Tibial artery (tissue), 4 donors: ENCODE measurements at regions of chr17 and their contacts with region 1.

Region 1: DNA sequence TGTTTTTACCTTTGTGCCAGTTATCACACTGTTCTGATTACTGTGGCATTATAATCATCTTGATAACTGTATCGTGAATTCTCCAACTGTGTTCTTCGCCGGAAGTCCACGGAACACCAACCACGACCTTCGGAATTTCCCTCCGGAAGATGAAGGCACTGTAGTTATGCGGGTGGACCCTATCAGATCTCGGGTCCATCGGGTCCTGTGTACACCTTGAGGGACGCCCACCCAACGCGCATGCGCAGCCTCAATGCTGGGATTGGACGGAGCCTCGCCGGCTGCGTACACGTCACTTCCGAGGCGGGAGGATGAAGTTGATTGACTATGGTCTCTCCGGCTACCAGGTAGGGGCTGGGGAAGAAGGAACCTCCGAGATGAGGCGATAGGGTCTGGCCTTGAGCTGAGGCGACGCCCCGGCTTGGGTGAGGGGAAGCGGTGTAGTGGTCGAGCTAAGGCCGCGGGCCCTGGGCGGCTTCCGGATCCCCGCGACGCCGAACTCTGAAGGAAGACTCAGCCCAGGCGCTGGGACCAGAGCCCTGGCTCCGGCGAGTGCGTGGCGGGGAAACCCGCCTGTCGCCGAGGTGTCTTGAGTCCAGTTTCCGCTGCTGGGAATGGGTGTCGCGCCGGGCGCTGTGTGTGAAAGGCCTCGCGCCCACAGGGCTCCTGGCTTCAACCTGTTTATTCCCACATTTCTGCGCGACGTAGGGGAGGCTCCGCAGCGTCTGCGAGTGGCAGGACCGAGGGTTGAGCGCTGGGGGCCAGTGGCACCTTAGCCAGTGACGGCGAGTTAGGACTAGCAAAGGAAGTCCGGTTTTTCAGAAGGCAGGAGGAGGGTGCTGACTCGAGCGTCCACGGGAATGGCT is at the start of gene DHRS7B:
- DNase-seq: peak; percentile 94 to 96
- H3K4me3 ChIP-seq: peak within 1 kb of the TSS; percentile 68 to 96
- H3K27ac ChIP-seq: peak within 1 kb of the TSS; percentile 87 to 95
- H3K4me1 ChIP-seq: peaks cover 0 to 11% (median 10%) of the 10 kb centered on the region in 4 donors
- H3K27me3 ChIP-seq: no peaks in the 10 kb centered on the region
- CTCF ChIP-seq: no peak

Region 2: DNA sequence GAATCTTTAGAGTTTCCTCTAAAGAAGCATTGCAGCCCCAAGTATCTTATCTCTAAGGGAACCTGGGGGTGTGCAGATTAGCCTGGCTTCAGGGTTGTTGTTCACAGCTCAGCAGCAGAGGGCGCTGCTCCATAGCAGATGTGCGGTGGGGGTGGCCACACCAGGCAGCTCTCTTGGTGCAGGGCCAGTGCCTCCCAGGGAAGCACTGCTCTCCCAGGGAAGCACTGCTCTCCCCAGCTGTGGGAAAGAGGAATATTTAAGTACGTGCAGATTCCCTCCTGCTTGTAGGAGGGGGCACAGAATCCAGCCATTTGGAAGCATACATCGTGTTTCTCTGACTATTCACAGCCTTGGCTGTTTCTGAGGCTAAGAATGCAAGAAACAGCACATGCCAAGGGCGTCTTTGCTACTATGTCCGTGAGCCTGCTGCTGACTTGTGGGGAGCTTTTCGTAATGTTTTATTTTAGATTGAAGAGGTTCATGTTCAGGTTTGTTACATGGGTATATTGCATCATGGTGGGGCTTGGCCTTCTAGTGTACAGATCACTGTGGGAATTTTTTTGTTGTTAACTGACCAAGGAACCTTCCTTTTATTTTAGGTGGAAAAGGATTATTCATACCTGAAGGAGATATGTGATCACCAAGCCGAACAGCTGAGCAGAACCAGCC is 899.9 kb before region 1 on chr17:
- intact Hi-C with region 1: no loop called
- DNase-seq: peak; percentile 81 to 91
- H3K4me3 ChIP-seq: no peak overlapping the region
- H3K27ac ChIP-seq: peak overlapping the region; percentile 13 to 50
- H3K4me1 ChIP-seq: peaks cover 0 to 57% (median 14%) of the 10 kb centered on the region in 4 donors
- H3K27me3 ChIP-seq: no peaks in the 10 kb centered on the region
- CTCF ChIP-seq: peak; percentile 78 to 98

Region 3: GRCh38 chr17:21043286-21044232 is 83.3 kb before region 1 on chr17:
- intact Hi-C with region 1: loop called (anchors 10 kb)
- DNase-seq: peak; percentile 98 to 99
- H3K4me3 ChIP-seq: peak overlapping the region; percentile 99 to 100
- H3K27ac ChIP-seq: peak overlapping the region; percentile 80 to 100
- H3K4me1 ChIP-seq: peaks cover 0 to 31% (median 24%) of the 10 kb centered on the region in 4 donors
- H3K27me3 ChIP-seq: no peaks in the 10 kb centered on the region
- CTCF ChIP-seq: peak; percentile 84 to 90

Region 4: DNA sequence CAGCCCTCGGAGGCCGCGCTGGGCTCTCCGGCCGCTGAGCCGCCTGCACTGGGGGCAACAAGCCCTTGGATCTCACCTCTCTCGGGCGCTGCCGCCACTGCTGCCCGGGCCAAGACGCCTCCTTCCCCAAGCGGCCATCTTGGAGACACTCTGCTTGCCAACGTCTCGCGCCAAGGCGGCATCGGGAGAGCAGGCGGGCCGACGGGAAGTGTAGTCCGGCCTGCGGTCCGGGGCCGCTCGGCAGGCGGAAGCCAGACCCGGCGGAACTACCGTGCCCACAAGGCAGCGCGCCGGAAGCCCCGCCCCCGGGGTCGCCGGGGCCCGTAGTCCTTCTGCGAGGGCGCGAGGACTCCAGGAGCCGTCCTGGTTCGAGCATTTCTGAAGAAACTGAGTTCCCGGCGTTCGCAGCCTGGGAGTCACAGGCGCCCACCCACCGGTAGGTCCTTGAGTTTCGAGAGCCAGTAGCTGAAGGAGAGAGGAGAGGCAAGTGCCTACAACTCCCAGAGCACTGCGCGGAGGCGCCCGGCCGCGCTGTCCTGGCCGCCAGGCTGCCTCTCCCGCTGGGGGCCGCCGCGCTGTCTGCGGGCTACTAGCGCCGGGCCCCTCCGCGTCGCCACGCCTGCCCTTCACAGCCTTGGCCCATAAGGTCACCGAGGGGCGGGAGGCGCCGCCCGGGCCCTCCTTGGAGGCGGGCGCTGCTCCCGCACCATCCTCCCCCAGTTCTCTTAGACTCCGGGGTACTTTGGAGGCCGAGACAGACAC is 87.3 kb after region 1 on chr17 and contains the start of gene TMEM11:
- intact Hi-C with region 1: loop called (anchors 5 kb)
- DNase-seq: peak; percentile 96 to 97
- H3K4me3 ChIP-seq: peak within 1 kb of the TSS; percentile 91
- H3K27ac ChIP-seq: peak within 1 kb of the TSS; percentile 91 to 96
- H3K4me1 ChIP-seq: peaks cover 0 to 54% (median 44%) of the 10 kb centered on the region in 4 donors
- H3K27me3 ChIP-seq: no peaks in the 10 kb centered on the region
- CTCF ChIP-seq: peak; percentile 13 to 40

Region 5: GRCh38 chr17:21239680-21240368 is 112.9 kb after region 1 on chr17:
- intact Hi-C with region 1: loop called (anchors 10 kb)
- DNase-seq: no peak
- H3K4me3 ChIP-seq: no peak overlapping the region
- H3K27ac ChIP-seq: no peak overlapping the region
- H3K4me1 ChIP-seq: peaks cover 0 to 37% (median 11%) of the 10 kb centered on the region in 4 donors
- H3K27me3 ChIP-seq: no peaks in the 10 kb centered on the region
- CTCF ChIP-seq: peak; percentile 35 to 40

Region 6: DNA sequence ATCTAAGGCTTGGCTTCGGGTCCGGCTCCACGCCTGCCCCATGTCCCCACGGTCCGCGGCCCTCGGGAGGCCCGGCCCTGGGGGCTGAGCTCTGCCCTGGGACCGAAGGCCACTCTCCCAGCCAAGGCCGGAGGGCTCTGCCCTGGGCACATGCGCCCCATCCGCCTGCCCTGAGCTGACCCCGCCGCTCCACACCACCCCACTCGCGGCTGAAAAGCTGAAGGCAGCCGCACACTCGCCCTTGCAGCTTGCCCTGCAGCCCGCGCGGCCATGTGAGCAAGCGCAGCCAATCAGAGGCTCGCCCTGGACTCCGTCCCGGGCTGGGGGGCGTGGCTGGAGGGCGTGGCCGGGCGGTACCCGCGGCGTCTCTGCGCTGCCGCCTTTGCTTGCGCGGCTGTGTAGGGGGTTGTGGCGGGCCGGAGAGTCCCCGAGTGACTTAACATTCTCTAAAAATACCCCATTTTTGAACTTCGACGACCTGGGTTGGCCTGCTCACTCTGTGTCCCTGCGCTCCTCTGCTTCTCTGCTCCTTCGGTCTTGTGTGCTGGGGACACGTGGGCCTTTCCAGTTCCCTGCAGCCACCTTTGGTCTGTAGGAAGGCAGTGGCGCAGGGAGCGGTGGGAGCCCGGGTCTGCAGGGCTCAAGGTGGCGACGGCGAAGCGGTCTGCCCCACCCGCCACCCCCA is 148.8 kb after region 1 on chr17:
- intact Hi-C with region 1: loop called (anchors 10 kb)
- DNase-seq: peak; percentile 91 to 95
- H3K4me3 ChIP-seq: peak overlapping the region; percentile 53 to 71
- H3K27ac ChIP-seq: peak overlapping the region; percentile 35 to 56
- H3K4me1 ChIP-seq: peaks cover 0 to 40% (median 17%) of the 10 kb centered on the region in 4 donors
- H3K27me3 ChIP-seq: no peaks in the 10 kb centered on the region
- CTCF ChIP-seq: no peak

Region 7: GRCh38 chr17:21511363-21512198 is 384.7 kb after region 1 on chr17:
- intact Hi-C with region 1: loop called (anchors 2 kb)
- DNase-seq: peak; percentile 84 to 90
- H3K4me3 ChIP-seq: peak overlapping the region; percentile 54 to 71
- H3K27ac ChIP-seq: peak overlapping the region; percentile 65 to 68
- H3K4me1 ChIP-seq: peaks cover 0 to 16% (median 10%) of the 10 kb centered on the region in 4 donors
- H3K27me3 ChIP-seq: peaks cover 0 to 1% of the 10 kb centered on the region in 2 donors
- CTCF ChIP-seq: peak; percentile 71 to 77